Activated T-helper 1 cell treated with anti-CD3 and anti-CD28 coated beads, Interleukin-12 subunit alpha, Interleukin-12 subunit beta, Interleukin-2, Interleukin-4 antibody, amounts not matched to agents 30 ng/mL and 10 ng/mL and 1 ng/mL, durations not matched to agents 14 hours and 24 hours and 36 hours (primary cell): ENCODE measurements at regions of chr12 and their contacts with region 1.

Region 1: GRCh38 chr12:23795494-23795893 is 154.0 kb downstream of the SOX5 start:
- DNase-seq: no peak
- H3K4me3 Mint-ChIP-seq: no peak overlapping the region
- H3K27ac Mint-ChIP-seq: no peak overlapping the region
- H3K4me1 Mint-ChIP-seq: no peaks in the 10 kb centered on the region
- H3K27me3 Mint-ChIP-seq: no peaks in the 10 kb centered on the region

Region 2: GRCh38 chr12:22059976-22060647 is 1735.4 kb before region 1 on chr12:
- intact Hi-C with region 1: loop called (anchors 5 kb)
- DNase-seq: no peak
- H3K4me3 Mint-ChIP-seq: no peak overlapping the region
- H3K27ac Mint-ChIP-seq: no peak overlapping the region
- H3K4me1 Mint-ChIP-seq: no peaks in the 10 kb centered on the region
- H3K27me3 Mint-ChIP-seq: no peaks in the 10 kb centered on the region

Region 3: GRCh38 chr12:23744696-23745095 is 50.8 kb before region 1 on chr12:
- intact Hi-C with region 1: no loop called
- DNase-seq: no peak
- H3K4me3 Mint-ChIP-seq: no peak overlapping the region
- H3K27ac Mint-ChIP-seq: no peak overlapping the region
- H3K4me1 Mint-ChIP-seq: no peaks in the 10 kb centered on the region
- H3K27me3 Mint-ChIP-seq: no peaks in the 10 kb centered on the region

Region 4: DNA sequence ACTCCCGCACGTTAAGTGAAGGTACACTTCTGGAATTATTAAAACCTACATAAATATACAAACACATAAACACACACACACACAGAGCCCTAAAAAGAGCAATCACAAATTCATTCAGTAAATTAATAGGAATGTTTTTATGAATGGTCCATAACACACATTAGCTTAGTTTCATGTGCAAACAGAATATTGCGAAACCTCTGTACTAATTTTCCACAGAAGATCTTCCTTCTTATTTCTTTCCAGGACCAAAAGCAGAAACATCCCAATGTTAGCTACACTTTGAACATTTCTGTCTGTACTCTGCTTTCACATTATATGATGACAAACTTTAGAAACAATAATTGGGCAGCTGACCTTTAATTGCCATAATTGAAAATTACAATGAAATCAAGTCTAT is 52.4 kb after region 1 on chr12:
- intact Hi-C with region 1: no loop called
- DNase-seq: no peak
- H3K4me3 Mint-ChIP-seq: no peak overlapping the region
- H3K27ac Mint-ChIP-seq: no peak overlapping the region
- H3K4me1 Mint-ChIP-seq: no peaks in the 10 kb centered on the region
- H3K27me3 Mint-ChIP-seq: no peaks in the 10 kb centered on the region